Spleen (tissue), 13 donors: ENCODE measurements at regions of chr9 and their contacts with region 1.

Region 1: GRCh38 chr9:71249729-71250317 is 128.4 kb upstream of the TRPM3 start:
- DNase-seq: no peak
- H3K4me3 ChIP-seq: no peak overlapping the region
- H3K27ac ChIP-seq: no peak overlapping the region
- H3K4me1 ChIP-seq: peaks cover 0 to 7% (median 0%) of the 10 kb centered on the region in 6 donors
- H3K27me3 ChIP-seq: peaks cover 0 to 13% (median 0%) of the 10 kb centered on the region in 7 donors
- CTCF ChIP-seq: peak in 10 of 11 experiments; percentile 13 to 80 (median 54)
- POLR2A ChIP-seq: no peak

Region 2: DNA sequence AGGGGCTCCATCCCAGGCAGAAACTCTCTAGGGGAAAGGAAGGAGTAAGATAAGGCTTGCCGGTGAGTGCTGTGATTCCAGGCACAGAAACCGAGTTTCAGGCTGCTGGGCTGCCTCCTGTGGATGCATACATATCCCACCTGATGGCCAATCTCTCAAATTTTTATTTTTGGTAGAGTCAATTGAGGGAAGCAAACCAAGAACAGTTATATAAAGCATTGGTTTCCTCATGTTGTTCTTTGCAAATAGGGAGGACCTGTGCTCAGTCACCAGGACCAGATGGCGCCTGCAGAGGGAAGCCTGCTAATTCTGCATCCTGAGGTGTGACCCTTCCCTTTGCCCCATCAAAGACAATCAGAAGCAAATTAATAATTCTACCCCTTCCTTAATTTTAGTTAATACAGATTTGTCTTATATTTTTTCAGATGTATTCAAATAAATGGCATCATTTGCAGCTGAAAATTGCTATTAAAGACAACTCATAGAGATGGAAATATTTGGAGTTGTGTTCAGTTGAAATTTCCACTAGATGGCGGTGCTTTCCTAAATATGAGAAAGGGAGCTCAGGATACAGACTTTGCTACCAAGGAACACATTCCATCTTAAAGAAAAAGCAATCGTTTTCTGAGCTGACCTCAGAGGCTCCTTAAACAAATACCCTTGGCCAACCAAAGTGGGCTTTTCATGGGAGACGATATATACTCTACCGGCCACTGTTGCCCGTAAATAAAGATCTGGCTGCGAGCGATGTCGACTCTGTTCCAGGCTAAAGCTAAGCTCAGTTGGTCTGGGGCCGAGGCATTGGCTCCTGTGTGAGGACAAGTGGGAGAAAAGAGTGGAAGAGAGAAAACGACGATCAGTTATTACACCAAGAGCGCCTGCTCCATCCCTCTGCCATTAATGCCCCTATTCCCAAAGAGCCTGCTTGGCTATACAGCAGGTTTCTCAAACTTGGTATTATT is 609.7 kb before region 1 on chr9:
- intact Hi-C with region 1: loop called (anchors 10 kb)
- DNase-seq: no peak
- H3K4me3 ChIP-seq: no peak overlapping the region
- H3K27ac ChIP-seq: no peak overlapping the region
- H3K4me1 ChIP-seq: no peaks in the 10 kb centered on the region
- H3K27me3 ChIP-seq: peaks cover 0 to 5% (median 0%) of the 10 kb centered on the region in 7 donors
- CTCF ChIP-seq: peak in 9 of 11 experiments; percentile 2 to 50 (median 40)
- POLR2A ChIP-seq: no peak

Region 3: DNA sequence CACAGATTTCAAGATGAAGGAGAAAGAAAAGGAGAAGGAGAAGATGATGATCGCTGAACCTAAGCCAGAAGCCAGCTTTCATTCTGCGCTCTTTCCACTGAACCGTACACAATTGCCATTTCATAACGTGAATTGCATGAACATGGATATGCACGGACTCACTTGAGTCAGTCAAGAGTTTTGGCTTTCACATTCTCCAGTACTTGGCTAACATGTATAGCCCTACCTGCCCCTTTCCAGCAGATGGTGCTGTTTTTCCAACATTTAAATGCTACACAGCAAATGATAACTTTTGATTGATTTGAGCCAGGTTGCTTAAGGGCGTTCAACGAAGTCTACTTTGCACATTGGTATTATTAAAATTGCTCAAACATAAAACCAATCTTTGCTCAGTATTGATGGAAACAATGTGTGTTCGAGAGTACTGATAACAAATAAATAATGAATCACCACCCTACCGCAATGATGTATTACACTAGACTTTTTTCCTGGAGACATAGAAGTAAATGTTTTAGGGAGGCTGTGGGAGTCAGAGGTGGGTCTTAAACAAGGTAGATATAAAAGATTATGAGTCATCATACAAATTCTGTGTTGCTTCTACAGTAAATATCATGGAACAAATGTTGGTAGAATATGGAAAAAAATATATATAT is 324.8 kb before region 1 on chr9:
- intact Hi-C with region 1: loop called (anchors 10 kb)
- DNase-seq: no peak
- H3K4me3 ChIP-seq: peak overlapping the region in 1 of 8 donors; percentile 11
- H3K27ac ChIP-seq: no peak overlapping the region
- H3K4me1 ChIP-seq: peaks cover 0 to 5% (median 0%) of the 10 kb centered on the region in 6 donors
- H3K27me3 ChIP-seq: no peaks in the 10 kb centered on the region
- CTCF ChIP-seq: peak; percentile 16 to 77 (median 67)
- POLR2A ChIP-seq: no peak